ENCODE measurements at regions of chr16 and their contacts with region 1.

Region 1: GRCh38 chr16:46853713-46854443 is 22.9 kb upstream of the C16orf87 start:
- DNase-seq: peak; percentile 66 to 73
- H3K4me3 ChIP-seq: no peak overlapping the region
- H3K27ac ChIP-seq: no peak overlapping the region
- H3K4me1 ChIP-seq: 0 out of 2 replicates have a peak, but pooled peaks cover 7% of the 10 kb centered on the region
- H3K27me3 ChIP-seq: no peaks in the 10 kb centered on the region
- CTCF ChIP-seq: peak; percentile 84

Region 2: GRCh38 chr16:46908540-46909372 is 54.9 kb after region 1 on chr16:
- CTCF ChIA-PET with region 1: interaction called, 26 read pairs
- POLR2A ChIA-PET with region 1: no interaction called
- intact Hi-C with region 1: loop called (anchors 1 kb)
- DNase-seq: peak; percentile 44 to 52
- H3K4me3 ChIP-seq: no peak overlapping the region
- H3K27ac ChIP-seq: no peak overlapping the region
- H3K4me1 ChIP-seq: no peaks in the 10 kb centered on the region
- H3K27me3 ChIP-seq: no peaks in the 10 kb centered on the region
- CTCF ChIP-seq: peak; percentile 89

Region 3: DNA sequence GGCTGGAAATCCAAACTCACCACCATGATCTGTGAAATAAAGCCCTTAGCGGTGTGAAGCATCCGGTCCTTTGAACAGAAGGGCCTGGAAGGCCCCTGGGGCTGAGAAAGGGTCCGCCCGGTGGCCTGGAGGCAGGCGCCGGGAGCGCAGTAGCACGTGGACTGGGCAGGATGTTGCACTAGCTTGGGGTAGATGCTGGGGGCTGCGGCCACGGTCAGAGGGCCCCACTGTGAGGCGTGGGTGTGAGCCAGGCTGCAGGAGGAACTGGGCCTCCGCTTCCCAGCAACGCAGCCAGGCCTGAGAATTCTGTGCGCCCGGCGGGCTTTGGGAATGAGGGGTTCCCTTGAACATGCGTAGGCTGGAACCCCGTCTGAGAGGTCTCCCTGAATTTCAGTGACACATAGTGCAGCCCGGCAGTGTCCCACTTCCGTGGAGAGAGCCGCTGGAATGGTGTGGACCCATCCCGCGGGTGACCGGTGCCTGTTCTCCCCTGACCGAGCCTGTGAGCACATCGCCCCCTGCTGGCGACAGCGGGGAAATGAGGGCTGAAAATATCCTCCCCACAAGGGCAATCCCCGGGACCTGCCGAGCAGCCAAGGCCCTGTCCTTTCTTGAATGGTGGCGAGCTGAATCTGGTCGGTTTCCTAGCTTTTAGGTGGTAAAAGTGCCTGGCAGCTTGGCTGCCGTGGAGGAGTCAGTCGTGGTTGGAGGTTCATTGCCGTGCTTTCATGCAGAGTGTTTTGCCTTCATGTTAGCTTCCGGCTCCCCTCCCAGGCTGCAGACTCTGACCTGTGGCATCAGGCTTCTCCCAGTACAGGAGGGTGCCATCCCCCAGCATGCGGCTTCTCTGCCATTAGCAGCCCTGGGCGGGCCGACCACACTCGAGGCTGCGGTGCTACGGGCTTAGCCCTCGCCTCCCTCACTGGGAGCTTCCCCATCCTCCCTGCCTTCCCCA is 75.8 kb after region 1 on chr16:
- CTCF ChIA-PET with region 1: no interaction called
- POLR2A ChIA-PET with region 1: no interaction called
- intact Hi-C with region 1: loop called (anchors 1 kb)
- DNase-seq: peak in 1 of 2 experiments; percentile 58
- H3K4me3 ChIP-seq: no peak overlapping the region
- H3K27ac ChIP-seq: no peak overlapping the region
- H3K4me1 ChIP-seq: no peaks in the 10 kb centered on the region
- H3K27me3 ChIP-seq: no peaks in the 10 kb centered on the region
- CTCF ChIP-seq: peak; percentile 91

Region 4: GRCh38 chr16:46947900-46948547 is 94.1 kb after region 1 on chr16:
- CTCF ChIA-PET with region 1: no interaction called
- POLR2A ChIA-PET with region 1: no interaction called
- intact Hi-C with region 1: no loop called
- DNase-seq: peak; percentile 20 to 41
- H3K4me3 ChIP-seq: no peak overlapping the region
- H3K27ac ChIP-seq: no peak overlapping the region
- H3K4me1 ChIP-seq: no peaks in the 10 kb centered on the region
- H3K27me3 ChIP-seq: no peaks in the 10 kb centered on the region
- CTCF ChIP-seq: peak; percentile 80

Region 5: GRCh38 chr16:48542020-48542473 is 1688.2 kb after region 1 on chr16:
- CTCF ChIA-PET with region 1: interaction called, 21 read pairs
- POLR2A ChIA-PET with region 1: no interaction called
- intact Hi-C with region 1: no loop called
- DNase-seq: peak in 1 of 2 experiments; percentile 21
- H3K4me3 ChIP-seq: no peak overlapping the region
- H3K27ac ChIP-seq: no peak overlapping the region
- H3K4me1 ChIP-seq: no peaks in the 10 kb centered on the region
- H3K27me3 ChIP-seq: no peaks in the 10 kb centered on the region
- CTCF ChIP-seq: peak; percentile 61